PC-9 (cell line): ENCODE measurements at regions of chr2 and their contacts with region 1.

Region 1: GRCh38 chr2:111120253-111121027 is at the start of gene BCL2L11:
- DNase-seq: peak; percentile 81 to 98
- H3K4me3 ChIP-seq: peak within 1 kb of the TSS; percentile 92
- H3K27ac ChIP-seq: peak within 1 kb of the TSS; percentile 87
- H3K4me1 ChIP-seq: peaks cover 13% of the 10 kb centered on the region
- H3K27me3 ChIP-seq: no peaks in the 10 kb centered on the region
- CTCF ChIP-seq: peak; percentile 59; the same call in 1 of the 2 replicates
- total RNA-seq, gene BCL2L11: 12.4 and 17.0 TPM in 2 replicates

Region 2: DNA sequence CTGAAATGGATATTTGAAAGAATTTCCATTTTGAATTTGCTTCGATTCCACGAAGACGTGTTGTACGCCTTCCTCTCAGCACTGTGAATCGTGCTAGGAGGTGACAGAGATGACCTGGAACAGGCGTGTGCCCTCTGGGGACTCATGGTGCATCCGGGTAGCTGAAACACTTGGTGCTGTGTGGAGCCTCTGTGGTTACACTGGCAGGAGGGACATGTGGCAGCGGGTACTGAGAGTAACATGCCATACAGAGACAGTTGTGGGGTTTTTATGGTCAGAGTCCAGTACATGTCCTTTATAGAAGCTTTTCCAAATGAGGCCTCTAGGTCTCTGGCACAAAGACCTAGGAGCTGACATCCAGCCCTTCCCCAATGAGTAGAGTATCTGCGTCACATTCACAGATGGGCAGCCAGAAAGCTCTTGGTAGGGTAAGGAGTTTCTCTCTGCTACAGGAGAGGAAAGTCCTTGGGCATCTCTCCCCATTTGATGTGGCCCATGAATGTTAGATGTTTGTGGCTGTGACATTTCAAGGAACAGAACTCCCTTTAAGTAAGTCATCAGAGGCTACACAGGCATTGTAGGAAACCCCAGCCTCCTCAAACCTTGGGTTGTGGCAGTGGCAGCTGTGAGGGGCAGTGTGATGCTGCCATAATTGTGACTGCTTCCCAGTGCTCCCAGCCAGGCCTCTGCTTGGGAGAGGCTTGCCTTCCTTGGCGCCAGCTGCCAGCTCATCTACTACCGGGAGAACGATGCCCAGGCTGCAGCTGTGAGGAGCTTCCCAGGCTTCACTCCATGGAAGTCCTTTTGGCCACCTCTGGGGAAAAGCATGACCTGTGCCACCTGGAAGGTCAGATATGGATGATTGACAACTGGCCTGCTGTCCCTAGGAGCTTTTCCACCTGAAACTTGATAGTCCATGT is 307.5 kb before region 1 on chr2:
- CTCF ChIA-PET with region 1: interaction called, 3 read pairs
- POLR2A ChIA-PET with region 1: no interaction called
- intact Hi-C with region 1: loop called (anchors 1 kb)
- DNase-seq: no peak
- H3K4me3 ChIP-seq: no peak overlapping the region
- H3K27ac ChIP-seq: no peak overlapping the region
- H3K4me1 ChIP-seq: no peaks in the 10 kb centered on the region
- H3K27me3 ChIP-seq: no peaks in the 10 kb centered on the region
- CTCF ChIP-seq: no peak

Region 3: GRCh38 chr2:110869472-110870077 is 250.9 kb before region 1 on chr2:
- CTCF ChIA-PET with region 1: no interaction called
- POLR2A ChIA-PET with region 1: no interaction called
- intact Hi-C with region 1: loop called (anchors 2 kb)
- DNase-seq: peak; percentile 64 to 84
- H3K4me3 ChIP-seq: no peak overlapping the region
- H3K27ac ChIP-seq: no peak overlapping the region
- H3K4me1 ChIP-seq: peaks cover 8% of the 10 kb centered on the region; the same call in 1 of the 2 replicates
- H3K27me3 ChIP-seq: no peaks in the 10 kb centered on the region
- CTCF ChIP-seq: no peak

Region 4: GRCh38 chr2:111032721-111033429 is 87.6 kb before region 1 on chr2:
- CTCF ChIA-PET with region 1: no interaction called
- POLR2A ChIA-PET with region 1: interaction called, 4 read pairs
- intact Hi-C with region 1: loop called (anchors 2 kb)
- DNase-seq: peak; percentile 69 to 88
- H3K4me3 ChIP-seq: peak overlapping the region; percentile 24; the same call in 1 of the 2 replicates
- H3K27ac ChIP-seq: peak overlapping the region; percentile 94
- H3K4me1 ChIP-seq: peaks cover 41% of the 10 kb centered on the region
- H3K27me3 ChIP-seq: no peaks in the 10 kb centered on the region
- CTCF ChIP-seq: no peak; the same call in 1 of the 2 replicates

Region 5: GRCh38 chr2:111071600-111072171 is 48.8 kb before region 1 on chr2:
- CTCF ChIA-PET with region 1: no interaction called
- POLR2A ChIA-PET with region 1: no interaction called
- intact Hi-C with region 1: no loop called
- DNase-seq: peak; percentile 16 to 84
- H3K4me3 ChIP-seq: no peak overlapping the region
- H3K27ac ChIP-seq: peak overlapping the region; percentile 61
- H3K4me1 ChIP-seq: peaks cover 55% of the 10 kb centered on the region
- H3K27me3 ChIP-seq: no peaks in the 10 kb centered on the region
- CTCF ChIP-seq: no peak

Region 6: GRCh38 chr2:111705711-111706336 is 585.4 kb after region 1 on chr2:
- CTCF ChIA-PET with region 1: no interaction called
- POLR2A ChIA-PET with region 1: no interaction called
- intact Hi-C with region 1: loop called (anchors 5 kb)
- DNase-seq: peak; percentile 82 to 99
- H3K4me3 ChIP-seq: peak overlapping the region; percentile 3; the same call in 1 of the 2 replicates
- H3K27ac ChIP-seq: peak overlapping the region; percentile 78
- H3K4me1 ChIP-seq: peaks cover 64% of the 10 kb centered on the region
- H3K27me3 ChIP-seq: no peaks in the 10 kb centered on the region
- CTCF ChIP-seq: no peak